Gastrocnemius medialis (tissue), 4 donors: ENCODE measurements at regions of chr7 and their contacts with region 1.

Region 1: DNA sequence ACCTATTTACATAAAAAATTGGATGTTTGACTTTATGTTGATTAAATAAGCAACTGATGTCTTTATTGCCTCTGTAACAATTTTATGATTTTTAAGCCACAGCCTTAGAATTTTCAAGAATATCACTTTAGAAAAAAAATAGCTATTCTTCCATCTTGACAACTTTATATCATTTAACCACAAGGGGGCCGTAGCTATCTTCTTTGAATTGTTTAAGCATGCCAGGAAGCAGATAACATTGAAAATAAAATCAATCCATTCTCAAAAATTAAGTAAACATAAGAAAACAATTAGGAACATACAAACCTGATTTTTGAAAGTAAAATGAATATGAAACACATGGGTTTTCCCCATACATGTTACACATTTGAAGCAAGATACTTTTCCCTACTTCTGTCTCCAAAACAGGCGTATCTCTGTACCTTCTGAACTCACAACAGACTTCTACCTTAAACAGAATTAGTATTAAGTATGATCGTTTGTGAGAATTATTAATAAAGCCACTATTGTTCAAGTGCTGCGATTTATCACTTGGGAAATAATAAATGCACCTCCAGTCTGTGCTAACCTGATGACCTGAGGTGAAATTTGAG is 209.0 kb downstream of the CACNA2D1 start:
- DNase-seq: no peak
- ATAC-seq: peak in 1 of 2 donors; percentile 55
- H3K4me3 ChIP-seq: no peak overlapping the region
- H3K27ac ChIP-seq: peak overlapping the region; percentile 53 to 64 (median 59)
- H3K4me1 ChIP-seq: peaks cover 44 to 56% of the 10 kb centered on the region in 2 donors
- H3K27me3 ChIP-seq: no peaks in the 10 kb centered on the region
- CTCF ChIP-seq: peak; percentile 55 to 68 (median 63)
- POLR2A ChIP-seq: no peak

Region 2: DNA sequence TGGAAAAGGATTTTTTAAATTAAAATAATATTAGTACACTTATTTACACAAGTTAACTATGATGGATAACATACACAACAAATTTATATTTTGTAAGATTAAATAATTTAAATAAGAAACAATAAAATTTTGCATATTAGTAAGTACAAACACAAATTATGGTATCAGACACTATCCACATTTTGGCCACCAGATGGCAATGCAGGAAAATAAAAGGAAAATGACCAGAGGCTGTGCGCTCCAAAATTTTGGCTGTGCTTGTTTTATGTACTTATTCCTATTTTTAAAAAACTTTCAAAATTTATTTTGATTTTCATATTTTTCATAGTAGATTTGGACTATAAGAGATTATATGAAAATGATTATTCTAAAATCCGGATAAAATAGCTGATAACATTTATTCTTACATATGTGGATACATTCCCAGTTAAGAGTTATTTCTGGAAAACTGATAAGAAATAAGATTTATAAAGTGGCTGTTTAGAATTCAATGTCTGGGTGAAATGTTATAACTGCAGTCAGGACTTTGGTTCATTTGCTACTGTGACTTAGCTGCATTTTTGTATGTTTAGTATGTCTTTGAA is 190.0 kb before region 1 on chr7:
- in situ Hi-C with region 1: loop called in 1 of 4 experiments (anchors 5 kb)
- intact Hi-C with region 1: loop called (anchors 10 kb)
- DNase-seq: peak in 1 of 2 donors; percentile 20
- ATAC-seq: peak; percentile 45 to 70
- H3K4me3 ChIP-seq: no peak overlapping the region
- H3K27ac ChIP-seq: no peak overlapping the region
- H3K4me1 ChIP-seq: no peaks in the 10 kb centered on the region
- H3K27me3 ChIP-seq: no peaks in the 10 kb centered on the region
- CTCF ChIP-seq: peak; percentile 62 to 74 (median 68)
- POLR2A ChIP-seq: no peak

Region 3: GRCh38 chr7:82443547-82444219 is 209.1 kb after region 1 on chr7 and contains the start of gene CACNA2D1:
- in situ Hi-C with region 1: loop called in 1 of 4 experiments (anchors 25 kb)
- intact Hi-C with region 1: loop called (anchors 1 kb)
- DNase-seq: peak; percentile 84 to 89
- ATAC-seq: peak; percentile 79 to 81
- H3K4me3 ChIP-seq: peak within 1 kb of the TSS; percentile 79 to 93 (median 84)
- H3K27ac ChIP-seq: peak within 1 kb of the TSS; percentile 96 to 97 (median 97)
- H3K4me1 ChIP-seq: peaks cover 34 to 35% of the 10 kb centered on the region in 2 donors
- H3K27me3 ChIP-seq: no peaks in the 10 kb centered on the region
- CTCF ChIP-seq: peak in 4 of 5 experiments; percentile 28 to 62 (median 52)
- POLR2A ChIP-seq: peak; percentile 32 to 62
- total RNA-seq, gene CACNA2D1: 83.9 to 157 (median 120) TPM

Region 4: GRCh38 chr7:82481499-82482097 is 247.0 kb after region 1 on chr7:
- in situ Hi-C with region 1: loop called in 2 of 4 experiments (anchors 10 kb)
- intact Hi-C with region 1: loop called (anchors 1 kb)
- DNase-seq: no peak
- ATAC-seq: no peak
- H3K4me3 ChIP-seq: no peak overlapping the region
- H3K27ac ChIP-seq: no peak overlapping the region
- H3K4me1 ChIP-seq: peaks cover 22 to 24% of the 10 kb centered on the region in 2 donors
- H3K27me3 ChIP-seq: no peaks in the 10 kb centered on the region
- CTCF ChIP-seq: peak; percentile 48 to 87 (median 77)
- POLR2A ChIP-seq: no peak

Region 5: DNA sequence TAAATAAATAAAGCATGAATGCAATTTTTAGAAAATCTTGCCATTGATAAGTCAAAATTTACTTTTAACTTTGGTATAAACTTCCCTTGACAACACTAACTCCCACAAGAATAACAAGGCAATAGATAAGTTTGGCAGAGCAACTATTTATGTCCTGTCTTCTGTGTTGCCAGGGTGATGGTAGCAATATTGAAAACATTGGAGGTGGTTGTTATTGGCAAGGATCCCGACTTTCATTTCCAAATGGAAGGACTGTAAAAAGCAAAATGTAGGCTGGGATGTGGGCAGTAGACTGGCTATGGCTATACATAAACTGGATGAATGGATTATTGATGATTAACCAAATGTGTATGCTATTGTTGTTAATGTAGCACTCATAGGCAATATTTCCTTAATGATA is 343.9 kb after region 1 on chr7:
- in situ Hi-C with region 1: loop called in 2 of 4 experiments (anchors 5 kb)
- intact Hi-C with region 1: no loop called
- DNase-seq: no peak
- ATAC-seq: no peak
- H3K4me3 ChIP-seq: no peak overlapping the region
- H3K27ac ChIP-seq: no peak overlapping the region
- H3K4me1 ChIP-seq: no peaks in the 10 kb centered on the region
- H3K27me3 ChIP-seq: no peaks in the 10 kb centered on the region
- CTCF ChIP-seq: no peak
- POLR2A ChIP-seq: no peak